A673 (cell line): ENCODE measurements at regions of chr12 and their contacts with region 1.

Region 1: GRCh38 chr12:21346542-21347205 is 12.0 kb upstream of the SLCO1A2 start:
- DNase-seq: no peak
- H3K4me3 ChIP-seq: no peak overlapping the region
- H3K27ac ChIP-seq: no peak overlapping the region
- H3K4me1 ChIP-seq: no peaks in the 10 kb centered on the region
- H3K27me3 ChIP-seq: no peaks in the 10 kb centered on the region
- CTCF ChIP-seq: no peak

Region 2: GRCh38 chr12:21248679-21249078 is 98.0 kb before region 1 on chr12:
- CTCF ChIA-PET with region 1: interaction called, 4 read pairs
- POLR2A ChIA-PET with region 1: interaction called, 11 read pairs
- intact Hi-C with region 1: no loop called
- DNase-seq: peak; percentile 19
- H3K4me3 ChIP-seq: no peak overlapping the region
- H3K27ac ChIP-seq: no peak overlapping the region
- H3K4me1 ChIP-seq: no peaks in the 10 kb centered on the region
- H3K27me3 ChIP-seq: no peaks in the 10 kb centered on the region
- CTCF ChIP-seq: peak; percentile 34; the same call in 1 of the 2 replicates

Region 3: GRCh38 chr12:21296751-21297406 is 49.8 kb before region 1 on chr12:
- CTCF ChIA-PET with region 1: no interaction called
- POLR2A ChIA-PET with region 1: no interaction called
- intact Hi-C with region 1: no loop called
- DNase-seq: peak; percentile 15
- H3K4me3 ChIP-seq: no peak overlapping the region
- H3K27ac ChIP-seq: no peak overlapping the region
- H3K4me1 ChIP-seq: no peaks in the 10 kb centered on the region
- H3K27me3 ChIP-seq: peaks cover 7% of the 10 kb centered on the region
- CTCF ChIP-seq: peak; percentile 75

Region 4: GRCh38 chr12:21551841-21552465 is 205.3 kb after region 1 on chr12:
- CTCF ChIA-PET with region 1: no interaction called
- POLR2A ChIA-PET with region 1: no interaction called
- intact Hi-C with region 1: no loop called
- DNase-seq: no peak
- H3K4me3 ChIP-seq: no peak overlapping the region
- H3K27ac ChIP-seq: no peak overlapping the region
- H3K4me1 ChIP-seq: no peaks in the 10 kb centered on the region
- H3K27me3 ChIP-seq: peaks cover 2% of the 10 kb centered on the region
- CTCF ChIP-seq: no peak